Activated CD8-positive, alpha-beta T cell treated with anti-CD3 and anti-CD28 coated beads, Interleukin-2, amount 10 ng/mL, durations not matched to agents 7 days and 5 days (primary cell): ENCODE measurements at regions of chr2 and their contacts with region 1.

Region 1: DNA sequence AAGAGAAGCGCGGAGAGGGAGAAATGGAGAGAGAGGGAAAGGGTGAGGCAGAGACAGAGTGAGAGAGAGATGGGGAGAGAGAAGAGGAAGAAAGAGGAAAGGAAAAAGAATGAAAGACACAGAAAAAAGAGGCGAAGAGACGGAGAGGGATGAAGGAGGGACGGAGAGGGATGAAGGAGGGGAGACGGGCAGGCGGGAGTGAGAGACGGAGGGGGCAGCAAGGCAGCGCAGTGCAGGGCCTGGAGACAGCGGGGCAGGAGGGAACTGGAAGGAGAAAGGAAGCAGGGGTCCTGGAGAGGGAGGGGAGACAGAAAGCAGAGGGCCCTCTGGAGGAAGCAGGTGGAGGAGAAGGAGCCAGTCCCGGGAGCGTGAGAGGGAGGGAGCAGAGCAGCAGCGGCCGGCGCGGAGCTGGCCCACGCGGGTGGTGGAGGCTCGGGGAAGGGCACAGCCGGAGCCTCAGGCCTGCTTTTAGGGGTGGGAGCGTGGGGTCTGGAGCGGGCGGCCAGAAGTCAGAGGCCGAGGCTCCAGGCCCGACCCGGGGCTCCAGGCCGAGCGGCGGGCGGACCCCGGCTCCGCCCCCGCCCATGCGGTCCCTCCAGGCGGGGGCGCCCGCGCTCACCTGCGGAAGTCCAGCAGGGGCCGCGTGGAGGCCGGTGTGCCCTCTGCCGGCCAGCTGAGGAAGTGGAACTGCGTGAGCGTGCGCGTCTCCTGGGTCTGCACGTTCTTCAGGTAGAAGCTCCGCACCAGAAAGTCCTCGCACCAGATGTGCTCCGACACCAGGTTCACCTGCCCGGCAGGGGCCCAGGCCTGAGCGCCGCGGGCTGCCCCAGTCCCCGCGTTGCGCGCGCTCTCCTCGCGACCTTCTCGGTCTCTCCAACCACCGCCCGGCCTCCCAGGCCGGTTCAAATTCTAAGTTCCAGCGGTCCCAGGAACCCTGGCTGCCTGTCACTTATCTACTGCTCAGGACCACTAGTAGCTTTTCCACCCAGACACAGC is 14.5 kb downstream of the PTPRN start:
- DNase-seq: peak; percentile 91
- ATAC-seq: peak; percentile 89
- H3K4me3 Mint-ChIP-seq: peak overlapping the region; percentile 51
- H3K27ac Mint-ChIP-seq: peak overlapping the region; percentile 66
- H3K4me1 Mint-ChIP-seq: peaks cover 34% of the 10 kb centered on the region
- H3K27me3 Mint-ChIP-seq: peaks cover 6% of the 10 kb centered on the region

Region 2: GRCh38 chr2:219057709-219058540 is 236.7 kb before region 1 on chr2:
- CTCF ChIA-PET with region 1: interaction called, 12 read pairs
- POLR2A ChIA-PET with region 1: no interaction called
- DNase-seq: peak; percentile 82
- ATAC-seq: peak; percentile 92
- H3K4me3 Mint-ChIP-seq: peak overlapping the region; percentile 42
- H3K27ac Mint-ChIP-seq: no peak overlapping the region
- H3K4me1 Mint-ChIP-seq: peaks cover 21% of the 10 kb centered on the region
- H3K27me3 Mint-ChIP-seq: peaks cover 62% of the 10 kb centered on the region

Region 3: DNA sequence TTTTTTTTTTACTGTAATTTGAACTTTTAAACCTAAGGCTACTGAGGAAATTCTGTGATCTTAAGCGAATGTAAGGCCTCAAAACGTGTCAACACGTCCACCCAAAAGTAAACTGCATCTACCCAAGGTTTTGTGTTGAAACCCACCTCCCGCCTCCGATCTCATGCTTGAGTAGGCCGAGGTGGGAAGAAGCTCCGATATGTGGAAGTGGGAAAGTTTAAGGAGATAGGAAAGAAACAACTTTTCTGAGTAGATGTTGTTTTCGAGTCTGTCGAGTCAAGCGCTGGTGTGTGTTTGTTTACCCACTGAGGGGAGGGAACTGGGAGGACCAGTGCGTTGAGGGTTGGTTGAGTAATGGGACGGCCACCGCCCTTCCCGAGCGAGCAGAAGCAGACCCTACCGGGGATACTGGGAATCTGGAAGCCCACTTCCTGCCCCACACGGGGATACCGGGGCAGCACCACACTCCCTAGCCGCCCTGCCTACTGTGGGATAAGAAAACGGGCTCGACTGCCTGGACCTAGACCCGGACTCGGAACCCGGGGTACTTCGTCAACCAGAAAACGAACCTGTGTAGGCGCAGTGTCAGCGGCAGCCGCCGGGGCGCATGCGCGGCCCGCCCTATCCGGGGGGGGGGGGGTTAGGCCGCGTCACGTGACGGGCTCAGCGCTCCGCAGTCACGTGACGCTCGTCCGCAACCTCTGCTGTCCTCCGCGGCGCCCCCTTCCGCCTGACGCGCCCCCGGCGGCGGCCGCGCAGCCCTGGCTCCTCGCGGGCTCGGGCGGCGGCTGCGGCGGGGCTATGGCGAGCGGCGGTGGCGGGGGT is 116.9 kb before region 1 on chr2 and contains the start of gene RETREG2:
- CTCF ChIA-PET with region 1: interaction called, 32 read pairs
- POLR2A ChIA-PET with region 1: interaction called, 3 read pairs
- DNase-seq: peak; percentile 82
- ATAC-seq: peak; percentile 55
- H3K4me3 Mint-ChIP-seq: peak within 1 kb of the TSS; percentile 92
- H3K27ac Mint-ChIP-seq: peak within 1 kb of the TSS; percentile 95
- H3K4me1 Mint-ChIP-seq: peaks cover 61% of the 10 kb centered on the region
- H3K27me3 Mint-ChIP-seq: no peaks in the 10 kb centered on the region
- total RNA-seq, gene RETREG2: 104 to 111 TPM

Region 4: DNA sequence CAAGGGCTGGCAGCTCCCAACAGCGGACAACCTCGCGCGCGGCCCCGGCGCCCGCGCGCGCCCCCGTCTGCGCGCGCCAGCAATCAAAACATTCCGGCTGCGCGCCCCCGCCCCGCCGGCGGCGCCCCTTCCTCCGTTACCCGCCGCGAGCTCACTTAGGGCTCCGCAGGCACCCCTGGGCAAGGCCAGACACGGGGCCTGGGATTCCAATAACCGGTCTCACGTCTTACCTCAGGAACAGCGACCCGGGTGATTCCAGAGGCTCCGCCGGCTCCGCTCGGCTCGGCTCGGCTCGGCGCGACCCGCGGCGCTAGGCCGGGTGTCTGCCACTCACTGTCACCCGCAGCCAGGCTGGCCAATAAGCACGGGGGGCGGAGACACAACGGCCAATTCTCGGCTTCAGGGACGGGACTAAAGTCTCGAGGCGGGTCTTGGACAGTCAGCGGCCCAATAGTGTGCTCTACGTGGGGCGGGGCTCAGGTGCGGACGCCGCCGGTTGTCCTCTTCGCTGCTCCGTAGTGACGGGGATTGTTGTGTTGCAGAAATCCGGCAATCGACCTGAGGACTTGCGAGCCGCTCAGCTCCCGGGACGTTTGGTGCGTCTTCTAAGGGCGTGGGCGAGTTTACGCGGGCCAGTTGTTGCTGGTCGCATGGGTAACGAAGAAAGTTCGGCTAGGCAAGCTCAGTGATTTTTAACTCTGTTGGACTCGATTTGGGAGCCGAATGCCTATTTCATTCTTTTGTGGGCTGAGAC is 65.2 kb before region 1 on chr2 and contains the starts of genes ANKZF1 and ATG9A:
- CTCF ChIA-PET with region 1: interaction called, 32 read pairs
- POLR2A ChIA-PET with region 1: interaction called, 7 read pairs
- DNase-seq: peak; percentile 100
- ATAC-seq: peak; percentile 98
- H3K4me3 Mint-ChIP-seq: peak within 1 kb of the TSS; percentile 100
- H3K27ac Mint-ChIP-seq: peak within 1 kb of the TSS; percentile 100
- H3K4me1 Mint-ChIP-seq: peaks cover 61% of the 10 kb centered on the region
- H3K27me3 Mint-ChIP-seq: no peaks in the 10 kb centered on the region
- total RNA-seq, gene ANKZF1: 106 to 114 TPM
- total RNA-seq, gene ATG9A: 51.7 to 53.8 TPM

Region 5: DNA sequence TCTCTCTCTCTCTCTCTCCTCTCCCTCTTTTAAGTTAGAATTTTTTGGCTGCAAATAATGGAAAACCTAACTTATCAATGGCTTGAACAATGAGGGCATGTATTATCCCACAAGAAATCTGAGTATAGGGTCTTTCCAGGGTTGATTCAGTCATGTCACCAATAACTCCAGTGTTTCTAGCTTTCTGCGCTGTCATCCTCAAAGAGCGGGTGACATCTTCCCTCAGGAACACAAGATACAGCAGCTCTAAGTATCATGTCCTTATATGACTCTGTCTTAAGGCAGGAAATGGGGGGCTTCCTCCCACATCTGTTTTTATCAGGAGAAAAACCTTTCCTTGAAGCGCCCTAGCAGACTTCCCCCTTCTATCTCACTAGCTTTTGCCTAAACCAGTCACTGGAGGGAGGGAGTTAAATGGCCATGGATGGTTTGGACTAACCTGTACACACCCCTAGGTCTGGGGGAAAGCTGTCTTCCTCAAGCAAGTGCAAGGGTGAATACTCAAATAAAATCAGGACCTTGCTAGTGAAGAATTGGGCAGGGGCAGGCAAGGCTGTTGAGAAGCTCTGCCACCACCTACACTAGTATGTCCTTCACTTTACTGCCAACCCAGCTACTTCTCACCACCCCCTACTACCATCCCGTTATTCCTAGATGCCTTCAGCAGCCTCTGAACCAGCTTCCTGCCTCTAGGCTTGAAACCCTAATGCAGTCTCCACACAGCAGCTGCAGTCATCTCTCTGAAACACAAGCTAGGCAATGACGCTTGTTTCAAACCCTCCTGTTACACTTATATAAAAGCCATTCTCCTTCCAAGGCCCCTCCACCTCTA is 33.4 kb before region 1 on chr2:
- CTCF ChIA-PET with region 1: interaction called, 60 read pairs
- POLR2A ChIA-PET with region 1: no interaction called
- DNase-seq: no peak
- ATAC-seq: no peak
- H3K4me3 Mint-ChIP-seq: no peak overlapping the region
- H3K27ac Mint-ChIP-seq: no peak overlapping the region
- H3K4me1 Mint-ChIP-seq: peaks cover 4% of the 10 kb centered on the region
- H3K27me3 Mint-ChIP-seq: peaks cover 15% of the 10 kb centered on the region

Region 6: DNA sequence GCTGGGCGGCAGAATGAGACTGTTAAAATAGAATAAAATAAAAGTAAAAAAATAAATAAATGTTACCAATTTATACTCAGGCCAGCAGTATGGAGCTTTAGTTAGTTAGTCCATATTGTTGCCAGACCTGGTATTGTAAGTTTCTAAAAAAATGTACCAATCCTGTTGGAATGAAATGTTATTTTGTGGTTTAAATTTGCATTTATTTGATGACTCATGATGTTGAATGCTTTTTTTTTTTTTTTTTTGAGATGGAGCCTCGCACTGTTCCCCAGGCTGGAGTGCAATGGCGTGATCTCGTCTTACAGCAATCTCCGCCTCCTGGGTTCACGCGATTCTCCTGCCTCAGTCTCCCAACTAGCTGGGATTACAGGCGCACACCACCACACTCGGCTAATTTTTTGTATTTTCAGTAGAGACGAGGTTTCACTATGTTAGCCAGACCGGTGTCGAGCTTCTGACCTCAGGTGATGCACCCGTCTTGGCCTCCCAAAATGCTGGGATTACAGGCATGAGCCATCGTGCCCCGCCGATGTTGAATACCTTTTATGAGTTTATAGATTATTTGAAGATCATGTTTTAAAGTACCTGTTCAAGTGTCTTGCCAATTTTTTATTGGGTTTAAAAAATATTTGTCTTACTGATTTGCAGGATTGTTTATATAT is 20.3 kb after region 1 on chr2:
- CTCF ChIA-PET with region 1: interaction called, 10 read pairs
- POLR2A ChIA-PET with region 1: no interaction called
- DNase-seq: no peak
- ATAC-seq: no peak
- H3K4me3 Mint-ChIP-seq: no peak overlapping the region
- H3K27ac Mint-ChIP-seq: no peak overlapping the region
- H3K4me1 Mint-ChIP-seq: no peaks in the 10 kb centered on the region
- H3K27me3 Mint-ChIP-seq: peaks cover 4% of the 10 kb centered on the region